CD8-positive, alpha-beta T cell (primary cell): ENCODE measurements at regions of chr4 and their contacts with region 1.

Region 1: DNA sequence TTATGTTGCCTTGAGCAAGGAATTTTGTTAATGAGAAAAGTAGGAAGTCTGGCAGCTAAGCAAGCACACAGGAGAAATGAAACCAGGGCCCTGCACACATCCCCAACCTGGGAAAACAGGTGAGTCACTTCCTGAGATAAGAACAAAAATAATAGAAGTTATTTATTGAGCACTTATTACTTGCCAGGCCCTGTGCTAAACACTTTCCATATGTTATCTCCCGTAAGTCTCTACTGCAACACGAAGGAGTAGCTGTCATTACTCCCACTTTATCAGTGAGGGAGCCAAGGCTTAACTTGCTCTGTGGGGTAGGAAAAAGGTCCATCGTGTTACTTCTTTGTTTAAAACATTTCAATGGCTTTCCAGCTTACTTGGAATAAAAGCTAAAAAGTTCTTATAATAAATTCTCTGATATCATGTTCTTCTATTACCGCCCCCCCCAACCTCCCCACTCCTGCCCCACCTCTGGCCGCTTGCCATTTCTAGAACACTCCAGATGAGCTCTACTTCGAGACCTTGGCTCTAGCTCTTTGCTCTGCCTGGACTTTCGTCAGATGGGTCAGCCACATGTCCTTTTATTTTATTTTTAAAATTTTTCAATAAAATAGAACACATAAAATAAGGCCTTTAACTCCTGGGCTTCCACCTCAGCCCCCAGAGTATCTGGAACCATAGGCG is 36.3 kb upstream of the PLAC8 start:
- DNase-seq: no peak
- ATAC-seq: no peak
- H3K4me3 ChIP-seq: no peak overlapping the region
- H3K4me3 Mint-ChIP-seq: no peak overlapping the region
- H3K27ac ChIP-seq: no peak overlapping the region
- H3K27ac Mint-ChIP-seq: no peak overlapping the region
- H3K4me1 ChIP-seq: peaks cover 10% of the 10 kb centered on the region
- H3K4me1 Mint-ChIP-seq: peaks cover 30% of the 10 kb centered on the region
- H3K27me3 ChIP-seq: no peaks in the 10 kb centered on the region
- H3K27me3 Mint-ChIP-seq: no peaks in the 10 kb centered on the region
- CTCF ChIP-seq: no peak

Region 2: GRCh38 chr4:82975792-82976191 is 175.0 kb before region 1 on chr4:
- CTCF ChIA-PET with region 1: no interaction called
- POLR2A ChIA-PET with region 1: no interaction called
- intact Hi-C with region 1: no loop called
- DNase-seq: no peak
- ATAC-seq: no peak
- H3K4me3 ChIP-seq: no peak overlapping the region
- H3K4me3 Mint-ChIP-seq: no peak overlapping the region
- H3K27ac ChIP-seq: no peak overlapping the region
- H3K27ac Mint-ChIP-seq: no peak overlapping the region
- H3K4me1 ChIP-seq: no peaks in the 10 kb centered on the region
- H3K4me1 Mint-ChIP-seq: no peaks in the 10 kb centered on the region
- H3K27me3 ChIP-seq: no peaks in the 10 kb centered on the region
- H3K27me3 Mint-ChIP-seq: no peaks in the 10 kb centered on the region
- CTCF ChIP-seq: no peak

Region 3: GRCh38 chr4:83083925-83084475 is 66.8 kb before region 1 on chr4:
- CTCF ChIA-PET with region 1: interaction called, 5 read pairs
- POLR2A ChIA-PET with region 1: no interaction called
- intact Hi-C with region 1: loop called in 1 of 2 experiments (anchors 2 kb)
- DNase-seq: peak; percentile 44 to 91 (median 61)
- ATAC-seq: peak; percentile 98
- H3K4me3 ChIP-seq: no peak overlapping the region
- H3K4me3 Mint-ChIP-seq: peak overlapping the region; percentile 47
- H3K27ac ChIP-seq: peak overlapping the region; percentile 67 to 81
- H3K27ac Mint-ChIP-seq: peak overlapping the region; percentile 97
- H3K4me1 ChIP-seq: peaks cover 29% of the 10 kb centered on the region
- H3K4me1 Mint-ChIP-seq: peaks cover 39% of the 10 kb centered on the region
- H3K27me3 ChIP-seq: no peaks in the 10 kb centered on the region
- H3K27me3 Mint-ChIP-seq: no peaks in the 10 kb centered on the region
- CTCF ChIP-seq: peak; percentile 65

Region 4: DNA sequence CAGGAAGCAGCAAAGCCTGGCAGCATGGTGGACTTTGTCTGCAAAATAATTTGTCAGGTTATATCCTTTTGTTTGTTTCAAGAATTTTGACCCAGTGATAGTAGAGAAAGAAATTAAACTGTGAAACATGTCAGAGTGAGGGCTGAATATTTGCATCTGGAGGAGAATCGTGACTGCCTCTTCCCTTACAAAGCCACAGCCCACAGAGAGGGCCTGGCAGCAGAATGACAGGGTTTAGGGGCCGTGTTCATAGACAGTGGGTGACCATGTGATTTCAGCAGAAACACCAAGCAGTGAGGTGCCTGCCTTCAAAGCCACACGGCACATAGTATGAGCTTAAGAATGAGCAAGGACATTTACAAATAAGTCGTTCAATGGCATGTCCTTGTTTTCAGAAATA is 11.8 kb before region 1 on chr4:
- CTCF ChIA-PET with region 1: interaction called, 10 read pairs
- POLR2A ChIA-PET with region 1: no interaction called
- intact Hi-C with region 1: no loop called
- DNase-seq: peak in 8 of 9 experiments; percentile 17 to 75 (median 47)
- ATAC-seq: peak; percentile 93
- H3K4me3 ChIP-seq: no peak overlapping the region
- H3K4me3 Mint-ChIP-seq: peak overlapping the region; percentile 24
- H3K27ac ChIP-seq: peak overlapping the region in 1 of 2 experiments; percentile 72
- H3K27ac Mint-ChIP-seq: peak overlapping the region; percentile 80
- H3K4me1 ChIP-seq: peaks cover 27% of the 10 kb centered on the region
- H3K4me1 Mint-ChIP-seq: peaks cover 31% of the 10 kb centered on the region
- H3K27me3 ChIP-seq: no peaks in the 10 kb centered on the region
- H3K27me3 Mint-ChIP-seq: no peaks in the 10 kb centered on the region
- CTCF ChIP-seq: no peak

Region 5: GRCh38 chr4:83207497-83208105 is 56.8 kb after region 1 on chr4:
- CTCF ChIA-PET with region 1: no interaction called
- POLR2A ChIA-PET with region 1: no interaction called
- intact Hi-C with region 1: no loop called
- DNase-seq: no peak
- ATAC-seq: no peak
- H3K4me3 ChIP-seq: no peak overlapping the region
- H3K4me3 Mint-ChIP-seq: no peak overlapping the region
- H3K27ac ChIP-seq: no peak overlapping the region
- H3K27ac Mint-ChIP-seq: no peak overlapping the region
- H3K4me1 ChIP-seq: peaks cover 38% of the 10 kb centered on the region
- H3K4me1 Mint-ChIP-seq: peaks cover 38% of the 10 kb centered on the region
- H3K27me3 ChIP-seq: no peaks in the 10 kb centered on the region
- H3K27me3 Mint-ChIP-seq: no peaks in the 10 kb centered on the region
- CTCF ChIP-seq: no peak